ENCODE measurements at regions of chr1 and their contacts with region 1.

Region 1: DNA sequence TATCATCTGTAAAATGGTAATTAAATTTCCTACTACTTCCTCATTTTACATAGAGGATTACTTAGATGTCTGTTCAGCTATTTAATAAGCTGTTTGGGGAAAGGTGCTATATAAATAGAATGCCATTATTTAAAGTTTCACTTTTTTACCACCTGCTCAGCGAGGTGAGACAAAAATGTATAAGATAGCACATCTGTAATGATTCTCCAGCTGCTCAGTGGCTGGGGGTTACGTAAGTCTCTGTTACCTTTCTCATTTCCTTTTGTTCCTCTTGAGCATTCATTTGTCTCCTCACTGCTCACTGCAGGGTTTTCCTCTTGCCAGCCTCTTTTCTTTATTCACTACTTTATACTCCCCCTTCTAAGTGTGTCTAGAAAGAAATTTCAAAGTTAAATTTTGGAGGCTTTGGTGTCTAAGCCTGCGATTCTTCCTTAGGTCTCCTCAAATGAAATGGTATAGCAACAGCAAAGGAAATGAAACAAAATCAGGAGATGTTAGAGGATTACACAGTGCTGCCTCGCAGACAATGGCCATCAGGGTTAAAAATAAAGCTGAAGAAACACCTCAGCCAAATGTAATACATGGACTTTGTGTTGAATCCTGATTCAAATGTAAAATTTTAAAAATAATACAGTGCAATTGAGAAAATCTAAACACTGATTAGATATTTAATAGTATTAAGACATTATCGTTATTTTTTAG is 6.8 kb downstream of the RGS8 start:
- DNase-seq: no peak
- ATAC-seq: no peak
- H3K4me3 ChIP-seq: no peak overlapping the region
- H3K27ac ChIP-seq: peak overlapping the region in 3 of 12 donors; percentile 27 to 53 (median 49)
- H3K4me1 ChIP-seq: peaks cover 3 to 49% (median 25%) of the 10 kb centered on the region in 12 donors
- H3K27me3 ChIP-seq: peaks cover 0 to 9% (median 0%) of the 10 kb centered on the region in 9 donors
- CTCF ChIP-seq: no peak
- POLR2A ChIP-seq: no peak

Region 2: GRCh38 chr1:182507665-182508064 is 169.9 kb before region 1 on chr1:
- intact Hi-C with region 1: no loop called
- DNase-seq: peak in 3 of 5 donors; percentile 25 to 37 (median 30)
- ATAC-seq: peak in 2 of 4 donors; percentile 31 to 44
- H3K4me3 ChIP-seq: no peak overlapping the region
- H3K27ac ChIP-seq: no peak overlapping the region
- H3K4me1 ChIP-seq: no peaks in the 10 kb centered on the region
- H3K27me3 ChIP-seq: no peaks in the 10 kb centered on the region
- CTCF ChIP-seq: no peak
- POLR2A ChIP-seq: no peak

Region 3: GRCh38 chr1:182552527-182552926 is 125.0 kb before region 1 on chr1:
- intact Hi-C with region 1: no loop called
- DNase-seq: no peak
- ATAC-seq: no peak
- H3K4me3 ChIP-seq: no peak overlapping the region
- H3K27ac ChIP-seq: no peak overlapping the region
- H3K4me1 ChIP-seq: no peaks in the 10 kb centered on the region
- H3K27me3 ChIP-seq: no peaks in the 10 kb centered on the region
- CTCF ChIP-seq: no peak
- POLR2A ChIP-seq: no peak

Region 4: GRCh38 chr1:182604169-182605164 is 73.1 kb before region 1 on chr1 and contains the start of gene RGS16:
- intact Hi-C with region 1: loop called in 2 of 10 experiments (anchors 5 kb)
- DNase-seq: peak; percentile 96 to 97 (median 96)
- ATAC-seq: peak; percentile 96 to 98 (median 98)
- H3K4me3 ChIP-seq: peak within 1 kb of the TSS; percentile 33 to 94 (median 60)
- H3K27ac ChIP-seq: peak within 1 kb of the TSS in 11 of 12 donors; percentile 16 to 76 (median 52)
- H3K4me1 ChIP-seq: peaks cover 0 to 58% (median 21%) of the 10 kb centered on the region in 12 donors
- H3K27me3 ChIP-seq: no peaks in the 10 kb centered on the region
- CTCF ChIP-seq: no peak
- POLR2A ChIP-seq: peak; percentile 7 to 92
- total RNA-seq, gene RGS16: 0.75 to 9.3 (median 2.0) TPM

Region 5: DNA sequence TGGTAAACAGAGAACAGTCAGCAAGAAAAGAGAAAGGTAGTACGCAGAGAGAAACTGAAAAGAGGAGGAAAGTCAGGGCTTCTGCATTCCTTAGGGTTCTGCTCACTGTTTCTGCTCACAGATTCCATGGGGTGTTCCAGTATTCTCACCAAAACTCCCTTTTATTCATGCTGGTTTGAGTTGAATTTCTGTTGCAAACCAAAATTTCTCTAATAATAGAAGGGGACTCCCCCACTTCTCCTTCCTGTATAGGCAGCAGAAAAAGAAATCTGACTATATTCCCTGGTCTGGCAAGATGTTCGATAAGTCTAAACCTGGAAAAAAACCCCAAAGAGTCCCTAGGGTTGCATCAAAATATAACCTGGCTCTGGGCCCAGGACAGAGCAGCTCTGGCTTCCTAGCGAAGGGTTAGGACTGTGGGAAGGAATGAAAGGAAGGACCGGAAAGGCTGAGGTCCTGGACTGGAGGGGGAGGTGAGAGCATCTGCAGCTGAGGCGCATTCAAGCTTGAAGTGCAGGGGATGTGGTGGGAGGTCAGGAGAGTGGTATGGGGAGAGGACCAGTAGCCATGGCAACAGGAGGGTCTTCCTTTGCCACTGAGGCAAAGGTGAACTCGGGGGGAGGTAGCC is 54.5 kb before region 1 on chr1:
- intact Hi-C with region 1: loop called in 1 of 10 experiments (anchors 5 kb)
- DNase-seq: peak in 4 of 5 donors; percentile 47 to 59 (median 57)
- ATAC-seq: peak; percentile 76 to 84 (median 80)
- H3K4me3 ChIP-seq: no peak overlapping the region
- H3K27ac ChIP-seq: peak overlapping the region in 8 of 12 donors; percentile 7 to 64 (median 34)
- H3K4me1 ChIP-seq: peaks cover 0 to 40% (median 21%) of the 10 kb centered on the region in 12 donors
- H3K27me3 ChIP-seq: no peaks in the 10 kb centered on the region
- CTCF ChIP-seq: no peak
- POLR2A ChIP-seq: no peak

Region 6: GRCh38 chr1:182740120-182740519 is 62.6 kb after region 1 on chr1:
- intact Hi-C with region 1: loop called in 1 of 10 experiments (anchors 10 kb)
- DNase-seq: no peak
- ATAC-seq: no peak
- H3K4me3 ChIP-seq: no peak overlapping the region
- H3K27ac ChIP-seq: no peak overlapping the region
- H3K4me1 ChIP-seq: no peaks in the 10 kb centered on the region
- H3K27me3 ChIP-seq: no peaks in the 10 kb centered on the region
- CTCF ChIP-seq: no peak
- POLR2A ChIP-seq: no peak

Region 7: DNA sequence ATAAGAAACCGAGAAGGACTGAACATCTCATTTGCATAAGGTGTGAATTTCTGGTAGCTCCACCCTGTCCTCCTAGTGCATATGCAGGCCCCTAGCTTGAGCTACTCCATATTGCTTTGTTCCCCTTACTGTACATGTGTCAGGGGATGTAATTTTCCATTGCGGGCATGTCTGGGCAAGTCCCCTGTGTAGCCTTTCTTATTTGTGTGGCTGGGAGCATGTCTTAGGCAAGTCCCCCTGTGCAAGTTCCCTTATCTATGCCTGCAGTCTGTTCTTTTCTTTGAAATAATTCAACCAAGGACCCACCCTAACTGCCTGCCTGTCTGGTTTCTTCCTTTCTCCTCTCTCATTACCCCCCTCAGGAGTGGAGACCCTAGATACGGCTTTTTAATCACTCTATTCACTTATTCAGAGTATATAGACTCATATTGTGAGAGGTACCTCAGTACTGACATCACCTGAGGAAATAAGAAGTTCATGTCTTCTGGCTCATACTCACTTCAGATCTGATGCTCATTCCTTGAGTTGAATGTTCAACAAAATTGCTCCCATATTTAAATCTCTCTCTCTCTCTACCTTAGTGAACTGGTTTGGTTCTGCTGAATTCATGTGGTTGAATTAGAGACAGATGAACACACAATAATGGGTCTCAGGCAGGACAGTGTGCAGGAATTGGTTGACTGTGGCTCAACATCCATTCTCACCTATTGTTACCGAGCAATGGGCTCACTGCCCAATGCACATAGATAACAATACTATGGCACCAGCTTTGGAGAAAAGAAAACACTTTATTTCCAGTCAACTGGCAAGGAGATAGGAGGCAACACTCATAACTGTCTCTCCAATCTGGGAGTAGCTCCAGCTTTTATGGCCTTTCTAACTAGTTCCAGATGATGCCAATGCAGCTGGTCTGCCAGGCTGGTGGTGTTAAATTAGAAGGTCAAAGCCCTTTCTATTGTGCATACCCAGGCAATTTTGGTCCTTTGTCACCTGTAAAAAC is 84.1 kb after region 1 on chr1:
- intact Hi-C with region 1: loop called in 1 of 10 experiments (anchors 10 kb)
- DNase-seq: no peak
- ATAC-seq: peak in 2 of 4 donors; percentile 24 to 75
- H3K4me3 ChIP-seq: no peak overlapping the region
- H3K27ac ChIP-seq: no peak overlapping the region
- H3K4me1 ChIP-seq: peaks cover 0 to 14% (median 0%) of the 10 kb centered on the region in 12 donors
- H3K27me3 ChIP-seq: no peaks in the 10 kb centered on the region
- CTCF ChIP-seq: no peak
- POLR2A ChIP-seq: no peak

Region 8: GRCh38 chr1:182781841-182782586 is 104.5 kb after region 1 on chr1:
- intact Hi-C with region 1: loop called in 2 of 10 experiments (anchors 5 kb)
- DNase-seq: peak; percentile 69 to 83 (median 78)
- ATAC-seq: peak in 3 of 4 donors; percentile 80 to 87 (median 82)
- H3K4me3 ChIP-seq: no peak overlapping the region
- H3K27ac ChIP-seq: no peak overlapping the region
- H3K4me1 ChIP-seq: peaks cover 0 to 13% (median under 1%) of the 10 kb centered on the region in 12 donors
- H3K27me3 ChIP-seq: no peaks in the 10 kb centered on the region
- CTCF ChIP-seq: peak; percentile 64 to 85 (median 79)
- POLR2A ChIP-seq: no peak

Region 9: DNA sequence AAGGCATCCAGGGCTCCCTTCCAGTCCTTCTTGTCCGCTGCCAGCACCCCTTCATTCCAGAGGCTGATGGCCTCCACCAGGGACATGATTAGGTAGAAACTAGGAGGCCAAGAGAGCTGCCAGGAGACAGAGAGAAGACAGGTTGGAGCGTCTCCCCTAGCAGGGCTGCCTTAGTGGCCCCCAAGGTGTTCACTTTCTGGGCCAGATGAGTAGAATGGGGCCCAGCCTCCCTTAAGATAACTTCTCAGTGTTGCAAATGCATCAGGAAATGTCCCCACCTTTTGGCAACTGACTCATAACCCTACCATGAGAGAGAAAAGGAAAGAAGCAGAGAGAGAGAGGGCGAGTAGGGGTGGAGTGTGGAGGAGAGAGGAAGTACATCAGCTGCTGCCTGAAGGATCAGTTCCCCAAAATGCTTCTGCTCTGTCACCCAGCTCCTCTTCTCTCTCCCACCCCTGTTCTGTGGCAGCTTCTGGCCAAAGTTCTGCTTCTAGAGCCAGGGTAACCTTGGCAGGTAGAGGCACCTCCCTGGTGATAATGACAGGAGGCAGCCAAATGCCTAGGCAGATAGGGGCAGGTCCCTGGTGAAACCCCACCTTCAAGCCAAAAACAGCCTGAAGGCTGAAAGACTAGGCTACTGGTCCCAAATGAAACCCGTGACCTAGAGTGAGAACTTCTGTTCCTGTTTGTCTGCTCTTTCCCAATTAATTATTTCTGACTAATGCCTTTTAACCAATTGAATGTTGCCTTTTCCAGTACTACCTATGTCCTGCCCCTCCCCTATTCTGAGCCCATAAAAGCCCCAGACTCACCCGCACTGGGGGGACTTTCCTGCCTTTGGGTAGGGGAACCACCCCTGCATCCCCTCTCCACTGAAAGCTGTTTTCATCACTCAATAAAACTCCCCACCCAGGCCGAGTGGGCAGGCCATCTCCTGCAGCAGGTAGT is 913.0 kb after region 1 on chr1 and contains the start of gene NCF2:
- intact Hi-C with region 1: no loop called
- DNase-seq: peak in 3 of 5 donors; percentile 37 to 46 (median 40)
- ATAC-seq: peak; percentile 63 to 89 (median 84)
- H3K4me3 ChIP-seq: peak within 1 kb of the TSS in 8 of 12 donors; percentile 11 to 63 (median 30)
- H3K27ac ChIP-seq: peak within 1 kb of the TSS in 8 of 12 donors; percentile 25 to 94 (median 52)
- H3K4me1 ChIP-seq: peaks cover 0 to 58% (median 0%) of the 10 kb centered on the region in 12 donors
- H3K27me3 ChIP-seq: no peaks in the 10 kb centered on the region
- CTCF ChIP-seq: no peak
- POLR2A ChIP-seq: no peak
- total RNA-seq, gene NCF2: 2.6 to 51.2 (median 5.1) TPM